ENCODE measurements at regions of chr10 and their contacts with region 1.

Region 1: GRCh38 chr10:7525314-7526016 is 114.6 kb upstream of the SFMBT2 start:
- DNase-seq: peak; percentile 71
- ATAC-seq: peak; percentile 88
- H3K4me3 ChIP-seq: peak overlapping the region; percentile 47 to 53 (median 47)
- H3K27ac ChIP-seq: no peak overlapping the region
- H3K4me1 ChIP-seq: peaks cover 9% of the 10 kb centered on the region; the same call in 1 of the 2 replicates
- H3K27me3 ChIP-seq: peaks cover 2 to 16% of the 10 kb centered on the region in 2 experiments; a peak in 3 of 5 replicates
- CTCF ChIP-seq: peak; percentile 87
- EP300 ChIP-seq: no peak
- POLR2A ChIP-seq: no peak
- RAD21 ChIP-seq: peak; percentile 79

Region 2: DNA sequence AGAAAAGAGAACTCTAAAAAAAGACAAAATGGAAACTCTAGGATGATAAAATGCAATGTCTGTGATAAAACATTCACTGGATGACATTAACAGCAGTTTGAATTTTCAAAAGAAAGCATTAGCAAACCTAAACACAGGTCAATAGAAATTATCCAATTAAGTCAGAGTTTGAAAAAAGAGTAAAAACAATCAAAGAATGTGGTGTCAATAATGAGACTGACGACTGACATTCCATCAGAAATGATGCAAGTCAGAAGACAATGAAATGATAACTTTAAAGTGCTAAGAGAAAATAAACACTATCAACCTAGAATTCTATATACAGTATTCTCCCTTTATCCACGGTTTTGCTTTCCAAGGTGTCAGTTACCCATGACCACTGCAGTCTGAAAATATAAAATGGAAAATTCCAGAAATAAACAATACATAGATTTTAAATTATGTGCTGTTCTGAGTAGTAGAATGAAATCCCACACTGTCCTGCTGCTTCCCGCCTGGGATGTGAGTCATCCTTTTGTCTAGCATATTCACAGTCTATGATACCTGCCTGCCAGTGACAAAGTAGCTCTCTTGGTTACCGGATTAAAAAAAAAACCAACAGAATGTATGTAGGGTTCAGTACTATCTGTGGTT is 76.3 kb before region 1 on chr10:
- CTCF ChIA-PET with region 1: no interaction called
- POLR2A ChIA-PET with region 1: no interaction called
- in situ Hi-C with region 1: no loop called
- intact Hi-C with region 1: no loop called
- DNase-seq: no peak
- ATAC-seq: no peak
- H3K4me3 ChIP-seq: no peak overlapping the region
- H3K27ac ChIP-seq: no peak overlapping the region
- H3K4me1 ChIP-seq: no peaks in the 10 kb centered on the region
- H3K27me3 ChIP-seq: peaks cover 0 to 11% of the 10 kb centered on the region in 2 experiments; a peak in 2 of 5 replicates
- CTCF ChIP-seq: no peak
- EP300 ChIP-seq: no peak
- POLR2A ChIP-seq: no peak
- RAD21 ChIP-seq: no peak

Region 3: DNA sequence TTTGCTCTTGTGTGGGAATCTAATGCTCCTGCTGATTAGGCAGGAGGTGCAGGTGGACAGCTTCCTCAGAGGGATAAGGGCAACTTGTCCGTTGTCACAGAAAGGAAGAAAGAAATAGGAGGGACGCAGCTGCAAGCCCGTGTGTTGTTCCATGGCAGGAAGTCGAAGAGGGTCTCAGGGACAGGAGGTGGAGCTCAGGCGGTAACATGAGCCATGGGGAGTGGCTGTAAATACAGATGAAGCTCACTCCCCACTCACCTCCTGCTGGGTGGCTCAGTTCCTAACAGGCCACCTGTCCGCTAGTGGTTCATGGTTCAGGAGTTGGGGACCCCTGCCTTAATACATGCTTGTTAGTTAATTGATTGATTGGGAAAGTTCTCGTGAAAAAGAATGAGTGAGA is 13.0 kb before region 1 on chr10:
- CTCF ChIA-PET with region 1: no interaction called
- POLR2A ChIA-PET with region 1: no interaction called
- in situ Hi-C with region 1: no loop called
- intact Hi-C with region 1: no loop called
- DNase-seq: peak; percentile 36
- ATAC-seq: peak; percentile 94
- H3K4me3 ChIP-seq: peak overlapping the region in 1 of 3 experiments; percentile 50; a peak in 2 of 6 replicates
- H3K27ac ChIP-seq: no peak overlapping the region
- H3K4me1 ChIP-seq: peaks cover 21% of the 10 kb centered on the region
- H3K27me3 ChIP-seq: peaks cover 0 to 5% of the 10 kb centered on the region in 2 experiments; a peak in 3 of 5 replicates
- CTCF ChIP-seq: no peak
- EP300 ChIP-seq: no peak
- POLR2A ChIP-seq: no peak
- RAD21 ChIP-seq: no peak

Region 4: DNA sequence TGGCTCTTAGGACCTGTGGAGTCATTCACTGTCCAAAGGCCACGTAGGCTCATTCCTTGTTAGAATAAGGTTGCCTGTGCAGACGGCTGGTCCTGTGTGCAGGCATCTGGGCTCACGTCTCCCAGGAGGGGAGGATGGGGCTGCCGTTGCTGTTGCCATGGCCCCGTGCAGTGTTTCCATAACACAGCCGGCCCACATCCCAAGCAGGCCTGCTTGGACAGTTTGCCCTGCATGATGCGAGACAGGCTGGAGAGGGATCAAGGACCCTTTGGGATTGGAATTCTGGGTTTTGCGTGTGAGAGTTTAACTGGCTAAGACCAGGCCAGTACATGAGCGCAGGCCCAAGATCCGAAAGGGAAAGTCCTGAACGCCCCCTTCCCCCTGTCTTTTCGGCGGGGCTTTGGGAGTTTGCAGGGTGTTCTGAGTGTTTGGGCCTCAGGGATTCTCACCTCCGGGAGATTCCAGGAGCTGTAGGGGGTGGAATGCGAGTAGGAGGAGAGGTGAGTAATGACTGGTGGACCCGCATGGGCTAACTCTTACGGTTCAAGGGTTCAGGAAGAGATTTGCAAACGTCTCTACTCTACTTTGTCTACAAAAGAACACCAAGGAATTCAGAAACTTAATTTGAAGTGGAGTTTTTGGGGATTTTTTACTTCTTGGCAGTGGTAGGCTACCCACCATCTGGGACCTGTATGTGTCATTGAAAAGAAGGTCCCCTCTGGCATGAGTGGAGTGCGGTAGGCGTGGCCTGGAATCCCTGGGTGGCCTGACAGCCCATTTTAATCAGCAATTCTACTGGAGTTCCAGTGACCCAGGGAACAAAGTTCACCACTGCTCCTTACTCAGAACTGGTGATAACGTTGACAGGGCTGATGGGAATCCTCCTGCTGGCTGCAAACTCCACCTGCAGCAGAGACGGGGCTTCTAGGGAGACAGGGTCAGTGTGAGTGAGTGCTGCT is 16.0 kb after region 1 on chr10:
- CTCF ChIA-PET with region 1: interaction called, 13 read pairs
- POLR2A ChIA-PET with region 1: interaction called, 4 read pairs
- in situ Hi-C with region 1: no loop called
- intact Hi-C with region 1: no loop called
- DNase-seq: peak; percentile 93
- ATAC-seq: peak; percentile 92
- H3K4me3 ChIP-seq: peak overlapping the region; percentile 36 to 66 (median 47)
- H3K27ac ChIP-seq: peak overlapping the region; percentile 86
- H3K4me1 ChIP-seq: peaks cover 56% of the 10 kb centered on the region
- H3K27me3 ChIP-seq: no peaks in the 10 kb centered on the region
- CTCF ChIP-seq: peak; percentile 53
- EP300 ChIP-seq: peak; percentile 61 to 89
- POLR2A ChIP-seq: peak in 1 of 2 experiments; percentile 68; a peak in 2 of 4 replicates
- RAD21 ChIP-seq: peak; percentile 58; the same call in 1 of the 2 replicates

Region 5: DNA sequence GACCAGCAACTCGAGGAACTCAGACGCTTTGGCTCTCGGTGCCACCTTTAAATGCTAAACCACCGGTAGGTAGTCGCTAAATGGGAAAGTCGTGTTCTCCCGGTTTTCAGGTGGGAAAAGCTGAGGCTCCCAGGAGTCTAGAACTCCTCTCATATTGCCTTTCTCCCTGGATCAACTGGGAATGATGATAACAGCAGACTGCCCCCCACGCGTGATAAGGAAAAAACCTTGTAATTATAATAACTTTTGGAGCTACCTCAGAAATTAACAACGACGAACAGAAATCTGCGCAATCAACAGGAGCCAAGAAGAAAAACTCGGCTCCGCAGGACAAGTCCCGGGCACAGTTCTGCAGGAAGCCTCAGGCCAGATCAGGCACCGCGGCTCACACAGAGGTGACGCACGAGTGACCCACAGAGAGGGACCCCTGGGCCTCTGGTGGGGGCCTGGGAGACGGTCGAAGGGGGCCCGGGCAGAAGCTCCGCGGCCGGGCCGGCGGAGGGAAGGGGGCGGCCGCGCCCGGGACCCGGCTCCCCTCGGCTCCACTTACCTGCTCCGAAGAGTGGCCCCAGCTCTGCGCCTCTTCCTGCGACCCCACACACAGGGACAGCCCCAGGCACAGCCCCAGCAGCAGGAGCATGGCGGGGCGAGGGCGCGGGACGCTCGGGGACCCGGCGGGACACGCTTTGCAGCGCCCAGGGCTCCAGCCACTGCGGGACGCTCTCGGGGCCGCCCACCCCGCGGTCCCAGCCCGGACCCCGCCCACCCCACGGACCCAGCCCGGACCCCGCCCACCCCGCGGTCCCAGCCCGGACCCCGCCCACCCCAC is 141.0 kb after region 1 on chr10 and contains the start of gene ITIH5:
- CTCF ChIA-PET with region 1: no interaction called
- POLR2A ChIA-PET with region 1: interaction called, 4 read pairs
- in situ Hi-C with region 1: no loop called
- intact Hi-C with region 1: loop called (anchors 5 kb)
- DNase-seq: no peak
- ATAC-seq: peak; percentile 73
- H3K4me3 ChIP-seq: peak within 1 kb of the TSS; percentile 78 to 80 (median 78)
- H3K27ac ChIP-seq: no peak within 1 kb of the TSS
- H3K4me1 ChIP-seq: peaks cover 21% of the 10 kb centered on the region
- H3K27me3 ChIP-seq: peaks cover 0 to 23% of the 10 kb centered on the region in 2 experiments; a peak in 2 of 5 replicates
- CTCF ChIP-seq: no peak
- EP300 ChIP-seq: no peak
- POLR2A ChIP-seq: no peak
- RAD21 ChIP-seq: no peak
- total RNA-seq, gene ITIH5: 3.5 and 8.9 TPM in 2 replicates

Region 6: GRCh38 chr10:7756360-7756992 is 231.0 kb after region 1 on chr10:
- CTCF ChIA-PET with region 1: interaction called, 10 read pairs
- POLR2A ChIA-PET with region 1: interaction called, 3 read pairs
- in situ Hi-C with region 1: no loop called
- intact Hi-C with region 1: loop called (anchors 2 kb)
- DNase-seq: peak; percentile 41
- ATAC-seq: peak; percentile 87
- H3K4me3 ChIP-seq: no peak overlapping the region
- H3K27ac ChIP-seq: no peak overlapping the region
- H3K4me1 ChIP-seq: no peaks in the 10 kb centered on the region
- H3K27me3 ChIP-seq: no peaks in the 10 kb centered on the region
- CTCF ChIP-seq: peak; percentile 73
- EP300 ChIP-seq: no peak
- POLR2A ChIP-seq: no peak
- RAD21 ChIP-seq: peak; percentile 54; the same call in 1 of the 2 replicates

Region 7: DNA sequence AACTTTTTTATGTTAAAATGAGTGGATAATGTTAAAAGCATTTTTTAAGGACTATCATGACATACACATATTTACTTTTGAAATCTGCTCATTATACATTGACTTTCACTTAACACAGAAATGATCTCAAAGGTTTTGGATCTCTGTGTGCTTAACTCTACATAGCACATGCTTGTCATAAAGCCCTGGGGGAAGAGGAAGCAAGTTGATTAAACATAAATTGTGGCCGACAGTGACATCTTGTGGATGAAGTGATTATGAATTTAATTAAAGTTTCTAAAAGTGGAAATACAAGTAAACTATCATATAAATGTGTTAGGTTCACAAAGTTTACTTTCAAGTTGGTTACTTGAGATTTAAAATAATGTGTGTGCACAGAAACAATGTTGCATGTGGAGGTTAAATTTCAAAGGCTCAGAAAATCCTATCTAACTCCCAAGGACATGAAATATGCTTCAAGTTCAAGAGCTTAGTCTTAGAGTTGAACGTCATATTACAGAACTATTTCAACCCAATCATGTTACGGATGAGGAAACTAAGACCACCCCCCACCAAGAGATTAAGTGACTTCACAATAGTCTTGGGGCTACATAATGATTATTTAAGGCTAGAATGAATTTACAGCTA is 1776.8 kb after region 1 on chr10:
- CTCF ChIA-PET with region 1: interaction called, 7 read pairs
- POLR2A ChIA-PET with region 1: no interaction called
- in situ Hi-C with region 1: loop called (anchors 5 kb)
- intact Hi-C with region 1: loop called (anchors 2 kb)
- DNase-seq: peak; percentile 33
- ATAC-seq: peak; percentile 43; the same call in 2 of the 3 replicates
- H3K4me3 ChIP-seq: no peak overlapping the region
- H3K27ac ChIP-seq: no peak overlapping the region
- H3K4me1 ChIP-seq: no peaks in the 10 kb centered on the region
- H3K27me3 ChIP-seq: no peaks in the 10 kb centered on the region
- CTCF ChIP-seq: peak; percentile 42
- EP300 ChIP-seq: no peak
- POLR2A ChIP-seq: no peak
- RAD21 ChIP-seq: no peak